B cell (primary cell): ENCODE measurements at regions of chr5 and their contacts with region 1.

Region 1: DNA sequence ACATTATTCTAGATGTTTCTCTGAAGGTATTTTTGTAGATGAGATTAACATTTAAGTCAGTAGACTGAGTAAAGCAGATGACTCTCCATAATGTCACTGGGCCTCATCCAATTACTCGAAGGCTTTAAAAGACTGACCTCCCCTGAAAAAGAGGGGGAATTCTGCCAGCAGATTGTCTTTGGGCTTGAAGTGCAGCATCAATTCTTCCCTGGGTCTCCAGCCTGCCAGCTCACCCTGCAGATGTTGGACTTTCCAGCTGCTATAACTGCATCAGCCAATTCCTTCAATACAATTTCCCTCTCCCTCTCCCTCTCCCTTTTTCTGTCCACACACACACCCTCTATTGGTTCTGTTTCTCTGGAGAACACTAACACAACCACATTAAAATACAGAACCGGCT is 472.8 kb downstream of the SPOCK1 start:
- DNase-seq: no peak
- ATAC-seq: no peak
- H3K4me3 ChIP-seq: no peak overlapping the region
- H3K4me3 Mint-ChIP-seq: no peak overlapping the region
- H3K27ac ChIP-seq: no peak overlapping the region
- H3K27ac Mint-ChIP-seq: no peak overlapping the region
- H3K4me1 ChIP-seq: no peaks in the 10 kb centered on the region
- H3K4me1 Mint-ChIP-seq: peaks cover 2% of the 10 kb centered on the region
- H3K27me3 ChIP-seq: peaks cover 0 to 4% (median 0%) of the 10 kb centered on the region in 4 experiments
- H3K27me3 Mint-ChIP-seq: no peaks in the 10 kb centered on the region
- CTCF ChIP-seq: no peak

Region 2: GRCh38 chr5:136453986-136454758 is 572.1 kb before region 1 on chr5:
- CTCF ChIA-PET with region 1: no interaction called
- POLR2A ChIA-PET with region 1: no interaction called
- intact Hi-C with region 1: loop called (anchors 5 kb)
- DNase-seq: no peak
- ATAC-seq: no peak
- H3K4me3 ChIP-seq: no peak overlapping the region
- H3K4me3 Mint-ChIP-seq: no peak overlapping the region
- H3K27ac ChIP-seq: no peak overlapping the region
- H3K27ac Mint-ChIP-seq: no peak overlapping the region
- H3K4me1 ChIP-seq: no peaks in the 10 kb centered on the region
- H3K4me1 Mint-ChIP-seq: no peaks in the 10 kb centered on the region
- H3K27me3 ChIP-seq: no peaks in the 10 kb centered on the region
- H3K27me3 Mint-ChIP-seq: no peaks in the 10 kb centered on the region
- CTCF ChIP-seq: no peak

Region 3: GRCh38 chr5:136750224-136750862 is 276.0 kb before region 1 on chr5:
- CTCF ChIA-PET with region 1: no interaction called
- POLR2A ChIA-PET with region 1: no interaction called
- intact Hi-C with region 1: no loop called
- DNase-seq: no peak
- ATAC-seq: no peak
- H3K4me3 ChIP-seq: no peak overlapping the region
- H3K4me3 Mint-ChIP-seq: no peak overlapping the region
- H3K27ac ChIP-seq: no peak overlapping the region
- H3K27ac Mint-ChIP-seq: no peak overlapping the region
- H3K4me1 ChIP-seq: no peaks in the 10 kb centered on the region
- H3K4me1 Mint-ChIP-seq: no peaks in the 10 kb centered on the region
- H3K27me3 ChIP-seq: no peaks in the 10 kb centered on the region
- H3K27me3 Mint-ChIP-seq: no peaks in the 10 kb centered on the region
- CTCF ChIP-seq: no peak